CD4-positive, alpha-beta memory T cell (primary cell): ENCODE measurements at regions of chr1 and their contacts with region 1.

Region 1: GRCh38 chr1:116538544-116538943 is 32.3 kb downstream of the CD58 start:
- DNase-seq: peak in 1 of 5 donors; percentile 67
- H3K4me3 ChIP-seq: no peak overlapping the region
- H3K4me3 Mint-ChIP-seq: no peak overlapping the region
- H3K27ac ChIP-seq: no peak overlapping the region
- H3K27ac Mint-ChIP-seq: peak overlapping the region in 6 of 7 donors; percentile 13 to 82 (median 55)
- H3K4me1 ChIP-seq: peaks cover 34% of the 10 kb centered on the region
- H3K4me1 Mint-ChIP-seq: peaks cover 25 to 52% (median 37%) of the 10 kb centered on the region in 4 donors
- H3K27me3 ChIP-seq: no peaks in the 10 kb centered on the region
- H3K27me3 Mint-ChIP-seq: no peaks in the 10 kb centered on the region

Region 2: DNA sequence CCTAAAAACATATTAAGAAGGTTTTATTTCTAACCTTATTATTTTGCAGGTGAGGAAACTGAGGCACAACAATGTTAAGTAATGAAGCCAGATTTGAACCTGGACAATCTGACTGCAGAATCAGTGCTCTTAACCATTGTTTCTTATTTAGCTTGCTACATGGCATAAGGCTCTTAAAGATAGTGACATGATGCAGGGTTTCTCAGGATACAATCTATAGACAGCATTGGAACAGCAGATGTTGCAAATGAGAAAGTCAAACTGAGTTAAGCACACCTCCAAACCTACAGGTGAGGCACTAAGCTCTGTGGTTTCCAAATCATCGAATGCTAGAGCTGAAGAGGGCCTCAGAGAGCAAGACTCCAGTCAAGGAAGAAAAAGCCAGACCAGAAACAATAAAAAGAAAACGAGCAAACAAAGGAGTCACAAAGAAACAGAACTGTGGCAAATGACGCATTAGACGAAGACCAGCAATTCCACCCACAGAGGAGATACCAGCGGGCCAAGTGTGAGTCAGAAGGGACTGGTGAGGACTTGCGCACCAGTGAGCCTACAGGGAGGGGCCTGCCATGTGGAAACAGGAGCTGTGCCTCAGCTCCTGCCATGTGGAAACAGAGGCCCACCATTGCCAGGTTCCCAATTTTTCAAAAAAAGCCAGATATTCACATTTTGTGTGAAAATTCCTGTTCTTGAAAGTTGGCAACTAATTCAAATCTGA is 17.9 kb after region 1 on chr1:
- CTCF ChIA-PET with region 1: interaction called, 5 read pairs
- POLR2A ChIA-PET with region 1: interaction called, 4 read pairs
- intact Hi-C with region 1: loop called (anchors 2 kb)
- DNase-seq: peak; percentile 68 to 92 (median 72)
- H3K4me3 ChIP-seq: no peak overlapping the region
- H3K4me3 Mint-ChIP-seq: peak overlapping the region; percentile 14 to 74 (median 48)
- H3K27ac ChIP-seq: peak overlapping the region; percentile 53
- H3K27ac Mint-ChIP-seq: peak overlapping the region; percentile 79 to 99 (median 88)
- H3K4me1 ChIP-seq: peaks cover 77% of the 10 kb centered on the region
- H3K4me1 Mint-ChIP-seq: peaks cover 60 to 87% (median 75%) of the 10 kb centered on the region in 4 donors
- H3K27me3 ChIP-seq: no peaks in the 10 kb centered on the region
- H3K27me3 Mint-ChIP-seq: no peaks in the 10 kb centered on the region